Naive thymus-derived CD4-positive, alpha-beta T cell (primary cell): ENCODE measurements at regions of chr13 and their contacts with region 1.

Region 1: GRCh38 chr13:37074703-37075102 is 15.2 kb upstream of the SUPT20H start:
- DNase-seq: peak in 3 of 9 donors; percentile 8 to 19 (median 15)
- ATAC-seq: peak; percentile 50
- H3K4me3 ChIP-seq: no peak overlapping the region
- H3K4me3 Mint-ChIP-seq: no peak overlapping the region
- H3K27ac ChIP-seq: no peak overlapping the region
- H3K27ac Mint-ChIP-seq: no peak overlapping the region
- H3K4me1 ChIP-seq: no peaks in the 10 kb centered on the region
- H3K4me1 Mint-ChIP-seq: no peaks in the 10 kb centered on the region
- H3K27me3 ChIP-seq: no peaks in the 10 kb centered on the region
- H3K27me3 Mint-ChIP-seq: peaks cover 0 to 14% (median 0%) of the 10 kb centered on the region in 5 donors

Region 2: GRCh38 chr13:37685206-37685605 is 610.5 kb after region 1 on chr13:
- CTCF ChIA-PET with region 1: no interaction called
- POLR2A ChIA-PET with region 1: no interaction called
- intact Hi-C with region 1: no loop called
- DNase-seq: no peak
- ATAC-seq: no peak
- H3K4me3 ChIP-seq: no peak overlapping the region
- H3K4me3 Mint-ChIP-seq: no peak overlapping the region
- H3K27ac ChIP-seq: no peak overlapping the region
- H3K27ac Mint-ChIP-seq: no peak overlapping the region
- H3K4me1 ChIP-seq: no peaks in the 10 kb centered on the region
- H3K4me1 Mint-ChIP-seq: no peaks in the 10 kb centered on the region
- H3K27me3 ChIP-seq: no peaks in the 10 kb centered on the region
- H3K27me3 Mint-ChIP-seq: peaks cover 0 to 4% (median 0%) of the 10 kb centered on the region in 5 donors

Region 3: GRCh38 chr13:38582133-38582532 is 1507.4 kb after region 1 on chr13:
- CTCF ChIA-PET with region 1: no interaction called
- POLR2A ChIA-PET with region 1: no interaction called
- intact Hi-C with region 1: loop called in 1 of 2 experiments (anchors 5 kb)
- DNase-seq: peak in 2 of 9 donors; percentile 1 to 2
- ATAC-seq: no peak
- H3K4me3 ChIP-seq: no peak overlapping the region
- H3K4me3 Mint-ChIP-seq: no peak overlapping the region
- H3K27ac ChIP-seq: no peak overlapping the region
- H3K27ac Mint-ChIP-seq: no peak overlapping the region
- H3K4me1 ChIP-seq: no peaks in the 10 kb centered on the region
- H3K4me1 Mint-ChIP-seq: no peaks in the 10 kb centered on the region
- H3K27me3 ChIP-seq: no peaks in the 10 kb centered on the region
- H3K27me3 Mint-ChIP-seq: peaks cover 0 to 16% (median 3%) of the 10 kb centered on the region in 5 donors

Region 4: DNA sequence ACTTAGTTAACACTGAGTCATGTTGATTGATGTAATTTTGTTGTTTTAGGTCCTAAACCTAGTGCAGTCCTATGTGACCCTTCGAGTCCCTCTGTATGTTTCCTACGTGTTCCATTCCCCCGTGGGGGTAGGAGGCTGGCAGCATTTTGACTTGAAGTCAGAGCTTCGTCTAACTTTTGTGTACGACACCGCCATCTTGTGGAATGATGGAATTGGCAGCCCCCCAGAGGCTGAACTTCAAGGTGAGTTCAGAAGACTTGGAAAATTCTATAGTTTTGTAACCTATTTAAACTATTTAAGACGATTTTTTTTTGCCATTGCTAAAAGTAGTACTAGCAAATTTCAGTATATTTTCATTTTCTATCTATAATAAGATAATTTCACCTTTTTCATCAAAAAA is 1798.0 kb after region 1 on chr13:
- CTCF ChIA-PET with region 1: no interaction called
- POLR2A ChIA-PET with region 1: no interaction called
- intact Hi-C with region 1: loop called in 1 of 2 experiments (anchors 1 kb)
- DNase-seq: peak in 6 of 9 donors; percentile 7 to 32 (median 12)
- ATAC-seq: no peak
- H3K4me3 ChIP-seq: no peak overlapping the region
- H3K4me3 Mint-ChIP-seq: peak overlapping the region in 1 of 10 donors; percentile 27
- H3K27ac ChIP-seq: no peak overlapping the region
- H3K27ac Mint-ChIP-seq: no peak overlapping the region
- H3K4me1 ChIP-seq: no peaks in the 10 kb centered on the region
- H3K4me1 Mint-ChIP-seq: peaks cover 0 to 3% (median 0%) of the 10 kb centered on the region in 7 donors
- H3K27me3 ChIP-seq: no peaks in the 10 kb centered on the region
- H3K27me3 Mint-ChIP-seq: peaks cover 11 to 34% (median 14%) of the 10 kb centered on the region in 5 donors

Region 5: GRCh38 chr13:38914070-38914469 is 1839.4 kb after region 1 on chr13:
- CTCF ChIA-PET with region 1: no interaction called
- POLR2A ChIA-PET with region 1: no interaction called
- intact Hi-C with region 1: loop called in 1 of 2 experiments (anchors 1 kb)
- DNase-seq: no peak
- ATAC-seq: no peak
- H3K4me3 ChIP-seq: no peak overlapping the region
- H3K4me3 Mint-ChIP-seq: no peak overlapping the region
- H3K27ac ChIP-seq: no peak overlapping the region
- H3K27ac Mint-ChIP-seq: no peak overlapping the region
- H3K4me1 ChIP-seq: no peaks in the 10 kb centered on the region
- H3K4me1 Mint-ChIP-seq: no peaks in the 10 kb centered on the region
- H3K27me3 ChIP-seq: no peaks in the 10 kb centered on the region
- H3K27me3 Mint-ChIP-seq: peaks cover 7 to 27% (median 18%) of the 10 kb centered on the region in 5 donors